Ovary (tissue), 10 donors: ENCODE measurements at regions of chr1 and their contacts with region 1.

Region 1: GRCh38 chr1:51878616-51879336 is at the start of gene NRDC:
- DNase-seq: peak; percentile 99 to 100 (median 100)
- H3K4me3 ChIP-seq: peak within 1 kb of the TSS; percentile 94
- H3K27ac ChIP-seq: peak within 1 kb of the TSS; percentile 82 to 95
- H3K4me1 ChIP-seq: peaks cover 12% of the 10 kb centered on the region
- H3K27me3 ChIP-seq: no peaks in the 10 kb centered on the region
- CTCF ChIP-seq: no peak
- EP300 ChIP-seq: peak; percentile 44
- POLR2A ChIP-seq: peak; percentile 96
- total RNA-seq, gene NRDC: 55.7 to 121 (median 88.6) TPM

Region 2: DNA sequence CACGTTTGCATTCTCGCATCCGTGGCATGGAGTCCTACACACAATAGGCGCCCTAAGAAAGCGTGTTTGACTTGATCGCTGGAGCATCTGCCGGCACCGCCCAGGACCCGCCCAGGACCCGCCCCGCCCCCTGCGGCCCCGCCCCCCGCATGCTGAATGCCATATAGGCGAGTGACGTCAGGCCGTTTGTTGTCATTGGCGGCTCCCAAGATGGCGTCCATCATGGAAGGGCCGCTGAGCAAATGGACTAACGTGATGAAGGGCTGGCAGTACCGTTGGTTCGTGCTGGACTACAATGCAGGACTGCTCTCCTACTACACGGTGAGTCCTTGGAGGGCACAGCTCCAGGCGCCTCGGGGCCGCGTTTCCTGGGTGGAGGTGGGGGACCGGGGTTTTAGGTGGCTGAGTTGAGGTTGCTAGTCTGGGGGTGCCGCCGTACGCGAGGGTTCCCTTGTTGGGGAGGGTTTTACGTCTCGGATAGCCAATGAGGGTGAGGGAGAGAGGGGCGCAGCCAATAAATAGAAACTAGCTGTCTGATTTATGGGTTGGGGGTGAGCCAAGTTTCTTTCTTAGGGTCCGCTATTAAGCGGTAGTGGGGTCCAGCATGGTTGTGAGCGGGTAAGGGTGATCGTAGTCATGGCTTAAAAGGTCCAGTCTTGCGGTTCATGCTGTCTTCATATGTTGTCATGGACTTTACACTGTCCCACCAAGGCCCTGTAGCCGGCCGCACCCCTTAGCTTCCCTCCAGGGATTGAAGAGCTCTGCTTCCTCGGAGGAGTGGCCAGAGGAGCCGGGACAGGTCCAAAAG is 261.7 kb before region 1 on chr1 and contains the start of gene OSBPL9:
- intact Hi-C with region 1: loop called in 1 of 4 experiments (anchors 5 kb)
- DNase-seq: peak; percentile 91 to 93 (median 91)
- H3K4me3 ChIP-seq: peak within 1 kb of the TSS; percentile 85
- H3K27ac ChIP-seq: peak within 1 kb of the TSS; percentile 89 to 90
- H3K4me1 ChIP-seq: peaks cover 7% of the 10 kb centered on the region
- H3K27me3 ChIP-seq: no peaks in the 10 kb centered on the region
- CTCF ChIP-seq: no peak
- EP300 ChIP-seq: no peak
- POLR2A ChIP-seq: peak; percentile 92
- total RNA-seq, gene OSBPL9: 53.1 to 92.4 (median 72.6) TPM

Region 3: DNA sequence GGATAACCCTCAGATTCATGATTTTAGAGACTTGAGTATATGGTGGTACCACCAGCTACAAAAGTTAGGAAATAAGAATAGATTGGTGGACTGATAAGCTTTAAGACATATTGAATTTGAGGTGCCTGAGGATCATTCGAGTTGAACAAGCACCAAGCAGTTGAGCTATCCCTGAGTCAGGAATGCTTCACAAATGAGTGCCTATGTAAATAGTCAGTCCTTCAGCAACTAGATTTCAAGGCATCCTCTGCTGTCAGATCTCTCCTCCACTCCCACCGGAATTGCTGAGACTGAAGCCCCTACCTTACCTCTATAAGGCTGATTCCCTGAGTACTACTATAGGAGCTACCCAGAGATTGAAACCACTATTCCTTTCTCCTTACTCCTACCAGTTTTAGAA is 184.4 kb after region 1 on chr1:
- intact Hi-C with region 1: no loop called
- DNase-seq: no peak
- H3K4me3 ChIP-seq: no peak overlapping the region
- H3K27ac ChIP-seq: no peak overlapping the region
- H3K4me1 ChIP-seq: no peaks in the 10 kb centered on the region
- H3K27me3 ChIP-seq: no peaks in the 10 kb centered on the region
- CTCF ChIP-seq: no peak
- EP300 ChIP-seq: no peak
- POLR2A ChIP-seq: no peak